Sigmoid colon (tissue), 7 donors: ENCODE measurements at regions of chr11 and their contacts with region 1.

Region 1: DNA sequence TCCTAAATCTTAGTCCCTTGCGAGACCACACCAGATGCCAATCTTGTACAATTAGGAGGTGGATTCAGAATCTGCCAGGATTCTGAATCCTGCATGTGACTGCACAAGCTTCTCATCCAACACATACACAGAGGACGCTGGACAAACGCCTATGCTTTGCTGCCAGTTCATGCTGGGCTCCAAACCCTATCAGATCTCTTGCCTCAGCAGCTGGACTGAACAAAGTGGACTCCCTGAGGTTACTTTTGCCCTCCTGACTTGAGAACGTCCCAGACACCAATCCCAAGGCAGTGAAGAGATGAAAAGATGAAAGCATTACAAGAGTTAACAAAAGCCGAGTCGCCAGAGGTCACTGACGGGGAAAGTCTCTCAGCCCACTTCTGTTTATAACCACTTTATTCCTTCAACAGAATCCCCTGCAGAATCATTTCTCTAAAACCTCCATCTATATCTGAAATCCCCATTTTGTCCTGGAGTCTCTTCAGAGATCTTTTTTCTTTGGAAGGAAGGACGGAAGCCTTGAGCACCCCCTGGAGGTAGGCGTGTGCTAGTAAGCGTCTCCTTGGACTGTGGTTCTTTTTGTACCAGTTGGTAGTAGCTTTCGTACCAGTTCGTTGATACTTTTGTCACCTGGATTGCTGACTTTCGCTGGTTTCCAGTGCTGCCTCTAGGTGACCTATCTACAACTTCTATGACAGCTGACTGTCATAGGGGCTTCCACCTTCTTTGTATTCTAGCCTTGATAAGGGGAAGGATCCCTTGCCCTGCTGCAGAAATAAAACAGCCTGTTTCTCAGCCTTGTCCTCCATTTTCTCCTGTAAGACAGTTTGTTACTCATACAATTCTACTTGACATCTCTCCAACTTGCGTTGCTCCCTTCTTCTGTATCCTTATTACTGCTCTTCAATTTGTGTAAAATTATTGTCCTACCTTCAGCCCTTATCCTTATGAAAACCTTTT is 26.1 kb upstream of the EED start:
- DNase-seq: peak; percentile 77
- H3K4me3 ChIP-seq: peak overlapping the region in 2 of 4 donors; percentile 29 to 33
- H3K27ac ChIP-seq: no peak overlapping the region
- H3K4me1 ChIP-seq: peaks cover 0 to 8% (median 4%) of the 10 kb centered on the region in 4 donors
- H3K27me3 ChIP-seq: no peaks in the 10 kb centered on the region
- CTCF ChIP-seq: peak; percentile 63 to 89 (median 81)
- EP300 ChIP-seq: no peak
- POLR2A ChIP-seq: no peak

Region 2: GRCh38 chr11:85595285-85595884 is 623.0 kb before region 1 on chr11:
- intact Hi-C with region 1: loop called (anchors 10 kb)
- DNase-seq: no peak
- H3K4me3 ChIP-seq: no peak overlapping the region
- H3K27ac ChIP-seq: no peak overlapping the region
- H3K4me1 ChIP-seq: no peaks in the 10 kb centered on the region
- H3K27me3 ChIP-seq: no peaks in the 10 kb centered on the region
- CTCF ChIP-seq: peak; percentile 14 to 52 (median 40)
- EP300 ChIP-seq: no peak
- POLR2A ChIP-seq: no peak

Region 3: GRCh38 chr11:85941380-85941973 is 276.9 kb before region 1 on chr11:
- intact Hi-C with region 1: loop called (anchors 1 kb)
- DNase-seq: peak; percentile 77
- H3K4me3 ChIP-seq: no peak overlapping the region
- H3K27ac ChIP-seq: no peak overlapping the region
- H3K4me1 ChIP-seq: no peaks in the 10 kb centered on the region
- H3K27me3 ChIP-seq: no peaks in the 10 kb centered on the region
- CTCF ChIP-seq: peak; percentile 21 to 77 (median 68)
- EP300 ChIP-seq: no peak
- POLR2A ChIP-seq: no peak